A673 (cell line): ENCODE measurements at regions of chr22 and their contacts with region 1.

Region 1: DNA sequence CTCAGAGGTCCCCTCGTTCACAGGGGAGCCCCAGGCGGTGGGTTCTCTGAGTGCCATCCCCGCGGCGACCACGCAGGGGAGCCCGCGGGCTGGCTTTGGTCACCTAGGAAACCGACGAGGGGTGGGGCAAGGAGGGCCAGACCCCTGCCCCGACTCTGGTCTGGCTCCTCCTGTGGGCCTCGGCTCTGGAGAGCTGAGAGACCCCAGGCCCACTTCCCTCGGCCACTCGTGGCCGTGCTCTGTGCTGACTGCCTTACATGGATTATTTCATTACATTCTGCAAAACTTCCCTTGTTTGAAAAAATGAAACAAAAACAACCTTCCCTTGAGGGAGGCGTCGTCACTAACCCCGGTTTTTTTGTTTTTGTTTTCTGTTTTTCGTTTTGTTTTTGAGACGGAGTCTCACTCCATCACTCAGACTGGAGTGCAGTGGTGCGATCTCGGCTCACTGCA is 15.1 kb upstream of the CYTH4 start:
- DNase-seq: peak; percentile 60
- H3K4me3 ChIP-seq: peak overlapping the region; percentile 43
- H3K27ac ChIP-seq: no peak overlapping the region
- H3K4me1 ChIP-seq: no peaks in the 10 kb centered on the region
- H3K27me3 ChIP-seq: peaks cover 12% of the 10 kb centered on the region
- CTCF ChIP-seq: peak; percentile 87

Region 2: DNA sequence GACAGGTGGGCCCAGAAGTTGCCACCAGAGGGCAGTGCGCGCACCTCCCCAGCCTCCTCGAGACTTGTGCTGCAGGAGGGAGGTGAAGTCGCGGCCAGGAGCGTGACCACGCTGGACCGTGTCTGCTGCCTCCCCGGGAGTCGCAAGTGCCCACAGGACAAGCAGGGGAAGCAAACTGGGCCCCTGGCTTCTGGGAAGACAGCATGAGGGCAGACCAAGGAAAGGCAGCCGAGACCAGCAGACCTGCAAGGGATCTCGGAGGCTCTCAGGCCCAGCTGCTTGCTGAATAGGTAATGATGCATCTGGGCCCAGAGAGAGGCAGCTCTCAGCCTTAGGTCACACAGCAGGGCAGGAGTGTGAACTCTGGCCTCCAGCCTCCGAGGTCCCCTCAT is 100.5 kb before region 1 on chr22:
- CTCF ChIA-PET with region 1: no interaction called
- POLR2A ChIA-PET with region 1: no interaction called
- intact Hi-C with region 1: loop called (anchors 10 kb)
- DNase-seq: peak; percentile 75
- H3K4me3 ChIP-seq: no peak overlapping the region
- H3K27ac ChIP-seq: no peak overlapping the region
- H3K4me1 ChIP-seq: no peaks in the 10 kb centered on the region
- H3K27me3 ChIP-seq: no peaks in the 10 kb centered on the region
- CTCF ChIP-seq: peak; percentile 94

Region 3: DNA sequence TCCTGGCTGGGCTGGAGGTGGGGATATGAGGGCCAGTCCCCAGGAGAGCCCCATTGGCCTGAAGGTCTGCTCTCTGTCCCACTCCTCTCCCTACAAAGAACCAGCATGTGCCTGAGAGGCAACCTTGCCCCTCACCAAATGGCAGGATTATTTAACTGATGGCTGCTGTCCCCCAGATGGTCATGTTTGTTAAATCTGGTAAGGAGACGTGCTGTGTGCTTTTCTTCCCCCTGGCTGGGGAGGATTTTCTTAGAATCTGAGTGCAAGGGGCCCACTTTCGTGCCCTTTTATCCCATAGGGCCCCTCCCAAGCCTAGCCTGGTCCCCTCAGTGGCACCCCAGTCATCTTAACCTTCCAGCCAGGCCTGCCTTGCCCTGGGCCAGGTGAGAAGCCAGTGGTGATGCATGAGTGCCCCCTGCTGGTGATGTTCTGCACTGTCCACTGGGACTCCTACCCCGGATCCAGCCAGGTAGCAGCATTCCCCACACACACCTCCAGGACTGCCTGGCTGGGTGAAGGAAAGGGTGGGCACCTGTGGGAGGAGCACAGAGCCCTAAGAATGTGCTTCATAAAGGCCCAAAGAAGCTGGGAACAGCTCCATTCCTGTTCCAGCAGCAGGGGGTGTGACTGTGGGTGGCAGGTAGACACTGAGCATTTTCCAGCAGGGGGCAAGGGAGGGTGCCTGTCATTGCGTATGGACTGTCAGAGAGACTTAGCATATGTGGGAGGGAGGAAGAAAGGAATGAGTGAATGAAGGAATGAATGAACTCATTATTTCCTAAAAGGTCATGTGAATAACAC is 190.1 kb after region 1 on chr22:
- CTCF ChIA-PET with region 1: interaction called, 3 read pairs
- POLR2A ChIA-PET with region 1: no interaction called
- intact Hi-C with region 1: loop called (anchors 5 kb)
- DNase-seq: peak; percentile 54
- H3K4me3 ChIP-seq: no peak overlapping the region
- H3K27ac ChIP-seq: no peak overlapping the region
- H3K4me1 ChIP-seq: peaks cover 4% of the 10 kb centered on the region
- H3K27me3 ChIP-seq: no peaks in the 10 kb centered on the region
- CTCF ChIP-seq: peak; percentile 93

Region 4: DNA sequence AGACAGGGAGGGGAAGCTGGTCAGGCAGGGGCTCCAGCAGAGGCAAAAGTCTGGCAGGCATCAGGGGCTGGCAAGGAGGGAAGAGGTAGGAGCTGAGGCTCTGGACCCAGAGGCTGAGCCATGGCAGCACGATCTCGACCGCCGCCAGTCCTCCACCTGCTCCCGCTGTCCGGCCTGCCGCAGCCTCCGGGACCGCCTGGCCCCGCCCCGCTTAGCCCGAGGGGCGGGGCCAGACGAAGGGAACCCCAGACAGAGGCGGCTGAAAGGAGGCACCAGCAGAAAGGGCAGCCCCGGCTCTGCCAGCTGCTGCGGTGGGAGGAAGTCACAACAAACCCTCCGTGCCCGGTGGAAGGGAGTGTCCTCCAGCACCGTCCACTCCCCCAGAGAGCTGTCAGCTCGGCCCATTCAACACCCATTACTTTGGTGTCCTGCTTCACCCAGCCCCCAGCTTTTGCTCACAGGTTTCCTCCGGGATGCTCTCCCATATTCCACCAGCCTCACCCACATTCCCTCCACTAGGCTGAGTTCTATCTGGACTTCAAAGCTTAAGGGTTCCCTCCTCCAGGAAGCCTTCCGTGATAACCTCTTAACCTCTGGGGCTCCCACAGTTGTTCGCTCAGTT is 219.2 kb after region 1 on chr22 and contains the start of gene MFNG:
- CTCF ChIA-PET with region 1: interaction called, 10 read pairs
- POLR2A ChIA-PET with region 1: no interaction called
- intact Hi-C with region 1: no loop called
- DNase-seq: peak; percentile 44
- H3K4me3 ChIP-seq: no peak within 1 kb of the TSS
- H3K27ac ChIP-seq: no peak within 1 kb of the TSS
- H3K4me1 ChIP-seq: peaks cover 4% of the 10 kb centered on the region
- H3K27me3 ChIP-seq: no peaks in the 10 kb centered on the region
- CTCF ChIP-seq: no peak
- total RNA-seq, gene MFNG: not detected in 2 replicates